ENCODE measurements at regions of chrX and their contacts with region 1.

Region 1: DNA sequence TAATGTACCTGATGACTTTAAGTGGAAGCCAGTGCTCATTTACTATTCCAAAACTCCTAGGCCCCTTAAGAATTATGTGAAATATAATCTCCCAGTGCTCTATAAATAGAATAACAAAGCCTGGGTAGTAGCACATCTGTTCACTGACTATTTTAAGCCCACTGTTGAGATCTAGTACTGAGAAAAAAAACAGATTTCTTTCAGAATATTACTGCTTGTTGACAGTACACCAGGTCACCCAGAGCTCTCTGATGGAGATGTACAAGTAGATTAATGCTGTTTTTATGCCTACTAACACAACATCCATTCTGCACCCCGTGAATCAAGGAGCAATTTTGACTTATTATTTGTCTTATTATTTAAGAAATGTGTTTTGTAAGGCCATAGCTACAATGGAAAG is 75.7 kb downstream of the FAM47C start:
- DNase-seq: no peak
- ATAC-seq: no peak
- H3K4me3 ChIP-seq: no peak overlapping the region
- H3K27ac ChIP-seq: no peak overlapping the region
- H3K4me1 ChIP-seq: no peaks in the 10 kb centered on the region
- H3K27me3 ChIP-seq: no peaks in the 10 kb centered on the region
- CTCF ChIP-seq: no peak
- EP300 ChIP-seq: no peak
- POLR2A ChIP-seq: no peak
- RAD21 ChIP-seq: no peak

Region 2: GRCh38 chrX:37291924-37292323 is 208.0 kb after region 1 on chrX:
- CTCF ChIA-PET with region 1: no interaction called
- POLR2A ChIA-PET with region 1: no interaction called
- in situ Hi-C with region 1: loop called (anchors 5 kb)
- intact Hi-C with region 1: no loop called
- DNase-seq: no peak
- ATAC-seq: no peak
- H3K4me3 ChIP-seq: no peak overlapping the region
- H3K27ac ChIP-seq: no peak overlapping the region
- H3K4me1 ChIP-seq: no peaks in the 10 kb centered on the region
- H3K27me3 ChIP-seq: no peaks in the 10 kb centered on the region
- CTCF ChIP-seq: no peak
- EP300 ChIP-seq: no peak
- POLR2A ChIP-seq: no peak
- RAD21 ChIP-seq: no peak